Activated CD4-positive, alpha-beta T cell treated with anti-CD3 and anti-CD28 coated beads, Interleukin-2, amount 10 ng/mL, durations not matched to agents 7 days and 5 days (primary cell): ENCODE measurements at regions of chr22 and their contacts with region 1.

Region 1: DNA sequence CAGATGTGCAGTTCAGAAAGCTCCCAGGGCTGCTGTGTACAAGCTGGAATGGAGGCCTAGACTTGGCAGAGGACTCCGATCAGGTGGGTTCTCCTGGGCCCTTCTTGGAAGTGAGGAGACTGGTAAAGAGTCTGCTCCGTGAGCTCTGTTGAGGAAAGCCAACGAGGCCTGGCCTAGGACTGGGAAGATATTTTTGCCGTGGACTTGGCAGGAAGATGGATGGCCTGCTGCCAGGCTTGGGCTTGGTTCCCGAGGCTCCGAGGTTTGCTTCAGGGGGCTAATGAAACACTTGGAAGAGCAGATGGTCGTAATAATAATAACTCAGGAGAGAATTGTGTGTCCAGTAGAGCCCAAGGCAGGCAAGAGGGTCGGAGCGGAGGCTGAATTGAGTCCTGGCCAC is 3.9 kb downstream of the GALR3 start:
- DNase-seq: no peak
- H3K4me3 Mint-ChIP-seq: no peak overlapping the region
- H3K27ac Mint-ChIP-seq: no peak overlapping the region
- H3K4me1 Mint-ChIP-seq: peaks cover 6% of the 10 kb centered on the region
- H3K27me3 Mint-ChIP-seq: peaks cover 15% of the 10 kb centered on the region

Region 2: GRCh38 chr22:37486224-37486845 is 340.7 kb before region 1 on chr22 and contains the start of gene MFNG:
- CTCF ChIA-PET with region 1: no interaction called
- POLR2A ChIA-PET with region 1: no interaction called
- DNase-seq: peak; percentile 79
- H3K4me3 Mint-ChIP-seq: peak within 1 kb of the TSS; percentile 88
- H3K27ac Mint-ChIP-seq: peak within 1 kb of the TSS; percentile 93
- H3K4me1 Mint-ChIP-seq: peaks cover 61% of the 10 kb centered on the region
- H3K27me3 Mint-ChIP-seq: no peaks in the 10 kb centered on the region
- total RNA-seq, gene MFNG: 218 to 219 TPM

Region 3: DNA sequence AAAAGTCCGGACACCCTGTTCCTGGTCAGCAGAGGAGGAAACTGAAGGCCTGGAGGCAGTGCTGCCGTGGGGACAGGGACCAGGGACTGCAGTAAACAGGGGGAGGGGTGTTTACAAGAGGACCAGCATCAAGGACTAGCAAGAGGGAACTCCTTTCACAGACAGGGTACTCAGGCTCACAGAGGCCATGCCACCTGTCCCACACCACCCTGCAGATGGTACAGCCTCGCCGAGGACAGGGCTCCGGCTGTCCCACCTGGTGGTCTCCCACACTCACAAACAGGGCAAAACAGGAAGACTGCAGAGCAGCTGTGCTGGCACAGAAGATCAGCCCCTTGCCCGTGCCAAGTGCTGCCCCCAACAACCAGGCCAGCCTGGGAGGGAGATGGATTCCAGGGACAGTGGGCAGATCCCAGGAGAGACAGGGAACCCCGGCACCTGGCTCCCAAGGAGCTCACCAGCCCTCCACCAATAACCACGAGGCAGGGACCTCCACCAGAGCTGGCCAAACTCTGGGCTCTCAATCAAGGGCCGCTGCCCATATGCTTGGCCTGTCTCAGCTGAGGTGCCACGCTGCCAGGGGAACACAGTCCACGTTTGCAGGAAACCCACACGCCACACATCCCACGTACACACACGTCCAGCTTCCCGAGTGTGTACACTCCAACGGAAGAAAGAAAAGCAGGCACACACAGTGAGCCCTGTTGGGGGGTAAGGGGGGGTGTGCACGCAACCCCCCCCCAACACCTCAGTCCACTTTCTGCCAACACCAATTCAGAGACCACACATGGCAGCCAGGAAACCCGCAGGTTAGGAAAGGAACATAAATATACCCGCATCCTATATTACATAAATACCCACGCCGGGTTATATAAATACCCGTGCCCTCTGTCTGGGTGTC is 488.1 kb after region 1 on chr22:
- CTCF ChIA-PET with region 1: no interaction called
- POLR2A ChIA-PET with region 1: interaction called, 10 read pairs
- DNase-seq: no peak
- H3K4me3 Mint-ChIP-seq: peak overlapping the region; percentile 85
- H3K27ac Mint-ChIP-seq: peak overlapping the region; percentile 96
- H3K4me1 Mint-ChIP-seq: peaks cover 69% of the 10 kb centered on the region
- H3K27me3 Mint-ChIP-seq: no peaks in the 10 kb centered on the region